IMR-90 (cell line): ENCODE measurements at regions of chr3 and their contacts with region 1.

Region 1: GRCh38 chr3:146065573-146066006 is 95.4 kb downstream of the PLOD2 start:
- DNase-seq: peak; percentile 76
- ATAC-seq: no peak
- H3K4me3 ChIP-seq: no peak overlapping the region
- H3K27ac ChIP-seq: no peak overlapping the region
- H3K4me1 ChIP-seq: no peaks in the 10 kb centered on the region
- H3K27me3 ChIP-seq: no peaks in the 10 kb centered on the region
- CTCF ChIP-seq: peak; percentile 75
- POLR2A ChIP-seq: no peak
- RAD21 ChIP-seq: peak; percentile 69

Region 2: GRCh38 chr3:146160964-146161662 is 95.5 kb after region 1 on chr3 and contains the start of gene PLOD2:
- CTCF ChIA-PET with region 1: interaction called, 10 read pairs
- POLR2A ChIA-PET with region 1: interaction called, 9 read pairs
- dilution Hi-C with region 1: no loop called
- in situ Hi-C with region 1: loop called (anchors 5 kb)
- intact Hi-C with region 1: loop called (anchors 1 kb)
- DNase-seq: peak; percentile 92
- ATAC-seq: peak; percentile 76
- H3K4me3 ChIP-seq: peak within 1 kb of the TSS; percentile 91
- H3K27ac ChIP-seq: peak within 1 kb of the TSS; percentile 94
- H3K4me1 ChIP-seq: peaks cover 20% of the 10 kb centered on the region
- H3K27me3 ChIP-seq: no peaks in the 10 kb centered on the region
- CTCF ChIP-seq: 0 out of 2 replicates have a peak, but pooled peaks have one; percentile 15
- POLR2A ChIP-seq: peak; percentile 97
- RAD21 ChIP-seq: 0 out of 2 replicates have a peak, but pooled peaks have one; percentile 2
- total RNA-seq, gene PLOD2: 117 and 225 TPM in 2 replicates

Region 3: DNA sequence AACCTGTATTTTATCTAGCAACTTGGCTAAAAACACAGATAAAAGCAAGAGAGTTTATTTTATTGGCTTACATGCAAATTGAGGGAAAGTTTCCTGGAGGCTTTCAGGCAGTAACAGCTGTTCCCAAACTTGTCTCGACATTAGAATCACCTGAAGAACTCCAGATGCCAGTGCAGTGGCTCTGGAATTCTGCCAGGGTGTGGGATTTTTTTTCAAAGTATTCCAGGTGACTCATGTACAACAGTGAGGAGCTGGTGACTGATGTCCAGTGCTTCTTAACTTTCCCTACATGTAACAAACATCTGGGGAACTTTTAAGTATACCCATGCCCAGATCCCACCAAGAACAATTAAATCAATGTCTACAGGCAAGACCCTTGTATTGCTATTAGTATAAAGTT is 119.0 kb after region 1 on chr3:
- CTCF ChIA-PET with region 1: interaction called, 29 read pairs
- POLR2A ChIA-PET with region 1: no interaction called
- dilution Hi-C with region 1: no loop called
- in situ Hi-C with region 1: no loop called
- intact Hi-C with region 1: loop called (anchors 1 kb)
- DNase-seq: peak; percentile 45
- ATAC-seq: no peak
- H3K4me3 ChIP-seq: no peak overlapping the region
- H3K27ac ChIP-seq: no peak overlapping the region
- H3K4me1 ChIP-seq: no peaks in the 10 kb centered on the region
- H3K27me3 ChIP-seq: no peaks in the 10 kb centered on the region
- CTCF ChIP-seq: no peak
- POLR2A ChIP-seq: no peak
- RAD21 ChIP-seq: no peak

Region 4: DNA sequence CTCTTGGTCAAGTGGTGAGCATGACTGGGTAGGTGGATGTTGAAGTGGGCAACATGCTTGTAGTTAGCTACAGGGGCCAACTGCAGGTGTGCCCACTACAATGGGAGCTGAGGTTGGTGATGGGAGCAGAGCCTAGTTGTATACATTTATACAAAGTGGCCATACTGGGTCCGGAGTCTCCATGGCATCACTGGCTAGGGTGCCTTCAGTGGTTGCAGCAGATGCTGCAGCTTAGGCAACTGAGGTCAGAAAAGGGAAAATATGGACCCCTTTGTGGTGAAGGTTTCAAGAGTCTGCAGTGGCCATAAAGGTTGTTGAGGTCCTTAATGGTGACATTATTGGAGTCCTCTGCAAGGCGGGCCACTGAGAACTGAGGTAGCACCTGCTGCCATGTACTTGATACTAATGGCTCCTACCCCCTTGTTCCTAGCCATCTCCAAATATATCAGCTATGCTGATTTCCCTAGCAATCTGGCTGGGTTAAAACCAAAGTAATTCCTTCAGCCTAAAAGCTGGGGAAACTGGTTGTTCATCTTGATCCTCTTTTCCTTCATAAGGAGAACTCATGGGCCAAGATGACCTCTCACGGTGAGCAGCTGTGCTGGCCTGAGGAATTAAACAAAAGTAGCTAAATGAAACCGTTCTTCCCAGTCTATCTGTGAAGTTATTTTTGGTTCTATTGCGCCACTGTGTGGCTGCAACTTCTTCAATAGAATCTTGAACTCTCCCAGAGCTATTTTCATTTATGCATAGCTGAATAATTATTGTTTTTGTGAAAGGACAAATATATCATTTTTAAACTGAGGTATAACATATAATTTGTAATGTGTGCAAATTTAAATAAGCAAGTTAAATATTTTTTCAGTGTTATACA is 261.3 kb after region 1 on chr3:
- CTCF ChIA-PET with region 1: interaction called, 4 read pairs
- POLR2A ChIA-PET with region 1: no interaction called
- dilution Hi-C with region 1: no loop called
- in situ Hi-C with region 1: loop called (anchors 5 kb)
- intact Hi-C with region 1: loop called (anchors 2 kb)
- DNase-seq: peak; percentile 82
- ATAC-seq: peak; percentile 93
- H3K4me3 ChIP-seq: no peak overlapping the region
- H3K27ac ChIP-seq: no peak overlapping the region
- H3K4me1 ChIP-seq: no peaks in the 10 kb centered on the region
- H3K27me3 ChIP-seq: no peaks in the 10 kb centered on the region
- CTCF ChIP-seq: peak; percentile 82
- POLR2A ChIP-seq: no peak
- RAD21 ChIP-seq: peak; percentile 84

Region 5: GRCh38 chr3:146577662-146578061 is 512.1 kb after region 1 on chr3:
- CTCF ChIA-PET with region 1: interaction called, 3 read pairs
- POLR2A ChIA-PET with region 1: no interaction called
- dilution Hi-C with region 1: no loop called
- in situ Hi-C with region 1: loop called (anchors 10 kb)
- intact Hi-C with region 1: loop called (anchors 2 kb)
- DNase-seq: peak; percentile 73
- ATAC-seq: peak; percentile 66; the same call in 1 of the 2 replicates
- H3K4me3 ChIP-seq: no peak overlapping the region
- H3K27ac ChIP-seq: no peak overlapping the region
- H3K4me1 ChIP-seq: peaks cover 2% of the 10 kb centered on the region; the same call in 1 of the 2 replicates
- H3K27me3 ChIP-seq: no peaks in the 10 kb centered on the region
- CTCF ChIP-seq: peak; percentile 70
- POLR2A ChIP-seq: no peak
- RAD21 ChIP-seq: peak; percentile 81